Caco-2 (cell line): ENCODE measurements at regions of chr5 and their contacts with region 1.

Region 1: DNA sequence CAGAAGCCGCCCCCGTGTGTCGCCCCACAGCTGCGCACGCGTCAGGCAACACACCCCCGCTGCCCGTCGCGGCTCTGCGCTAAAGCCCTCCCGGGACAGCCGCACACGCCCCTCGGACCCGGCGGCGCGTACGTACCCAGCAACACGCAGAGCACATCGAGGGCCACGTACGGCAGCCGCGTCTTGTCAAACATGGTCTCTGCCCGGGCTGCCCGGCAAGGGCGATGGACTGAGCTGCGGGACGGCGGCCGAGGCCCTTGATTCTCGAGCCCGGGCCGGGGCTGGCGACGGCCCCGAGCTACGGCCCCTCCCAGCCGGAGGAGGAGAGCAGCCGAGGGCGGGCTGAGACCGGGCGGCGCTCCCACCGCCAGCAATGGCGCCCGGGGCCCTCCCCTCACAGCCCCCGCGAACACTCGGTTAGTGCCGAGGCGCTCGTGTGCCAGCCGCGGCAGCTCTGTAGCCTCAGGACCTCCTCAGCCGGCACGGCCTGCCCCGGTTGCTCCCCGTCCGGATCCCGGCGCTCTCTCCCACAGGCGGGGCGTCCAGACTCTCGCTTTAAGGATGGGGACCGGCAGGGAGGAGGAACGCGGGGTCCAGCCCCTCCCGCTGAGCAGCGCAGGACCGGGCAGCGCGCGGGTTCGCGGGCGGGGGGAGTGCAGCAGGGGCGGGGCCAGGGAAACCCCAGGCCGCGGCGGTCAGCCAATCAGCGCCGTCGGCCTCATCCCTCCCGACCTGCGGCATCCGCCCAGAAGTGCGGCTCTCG is at the start of gene PLPP1:
- DNase-seq: peak; percentile 90 to 95
- H3K4me3 ChIP-seq: peak within 1 kb of the TSS; percentile 98
- H3K4me3 Mint-ChIP-seq: peak within 1 kb of the TSS; percentile 78
- H3K27ac Mint-ChIP-seq: peak within 1 kb of the TSS; percentile 78
- H3K4me1 ChIP-seq: peaks cover 8% of the 10 kb centered on the region
- H3K4me1 Mint-ChIP-seq: peaks cover 21% of the 10 kb centered on the region
- H3K27me3 ChIP-seq: no peaks in the 10 kb centered on the region
- H3K27me3 Mint-ChIP-seq: no peaks in the 10 kb centered on the region
- CTCF ChIP-seq: peak in 1 of 2 experiments; percentile 0
- total RNA-seq, gene PLPP1: 49.4 and 57.9 TPM in 2 replicates

Region 2: DNA sequence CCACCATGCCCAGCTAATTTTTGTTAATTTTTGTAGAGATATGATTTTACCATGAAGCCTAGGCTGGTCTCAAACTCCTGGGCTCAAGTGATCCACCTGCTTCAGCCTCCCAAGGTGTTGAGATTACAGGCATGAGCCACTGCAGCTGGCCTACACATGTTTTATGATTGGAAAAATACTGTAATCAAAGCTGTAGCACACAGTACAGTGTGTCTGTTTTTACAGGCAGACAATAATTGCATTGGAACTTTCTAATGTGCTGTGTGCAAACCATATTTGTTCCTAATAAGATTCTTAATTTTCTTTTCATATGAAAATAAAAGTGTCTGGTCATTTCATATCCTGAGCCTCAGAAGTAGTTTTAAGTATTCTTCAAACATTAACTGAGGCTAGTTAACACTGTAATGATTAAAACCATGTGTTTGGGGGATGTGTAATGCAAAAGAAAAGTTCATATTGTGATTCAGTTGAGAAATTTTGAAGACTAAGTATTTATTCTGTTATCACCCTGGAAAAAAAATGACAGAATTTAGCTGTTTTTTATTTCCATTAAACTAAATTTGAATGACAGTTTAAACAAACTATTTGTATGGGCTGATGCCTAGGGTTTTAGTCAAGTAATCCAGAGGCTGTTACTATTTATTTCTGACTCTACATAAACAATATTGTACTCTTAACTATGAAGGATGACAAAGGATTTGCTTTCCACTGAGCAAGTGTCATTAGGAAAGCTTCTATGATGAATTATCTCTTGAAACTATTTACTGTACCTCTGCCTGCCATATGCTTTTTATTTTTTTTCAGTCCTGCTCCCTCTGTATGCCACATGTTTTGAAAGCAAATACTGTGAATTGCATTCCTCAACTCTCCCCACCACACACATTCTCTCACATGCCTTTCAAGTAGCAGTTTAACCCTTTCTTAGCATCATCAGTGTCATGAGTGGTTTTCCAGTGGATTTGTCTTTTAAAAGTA is 115.3 kb before region 1 on chr5:
- CTCF ChIA-PET with region 1: no interaction called
- POLR2A ChIA-PET with region 1: no interaction called
- intact Hi-C with region 1: loop called (anchors 5 kb)
- DNase-seq: peak; percentile 47 to 59
- H3K4me3 ChIP-seq: no peak overlapping the region
- H3K4me3 Mint-ChIP-seq: peak overlapping the region; percentile 2
- H3K27ac Mint-ChIP-seq: peak overlapping the region; percentile 58
- H3K4me1 ChIP-seq: peaks cover 26% of the 10 kb centered on the region
- H3K4me1 Mint-ChIP-seq: peaks cover 33% of the 10 kb centered on the region
- H3K27me3 ChIP-seq: no peaks in the 10 kb centered on the region
- H3K27me3 Mint-ChIP-seq: no peaks in the 10 kb centered on the region
- CTCF ChIP-seq: no peak

Region 3: GRCh38 chr5:55521881-55522280 is 12.7 kb before region 1 on chr5:
- CTCF ChIA-PET with region 1: no interaction called
- POLR2A ChIA-PET with region 1: no interaction called
- intact Hi-C with region 1: loop called (anchors 2 kb)
- DNase-seq: no peak
- H3K4me3 ChIP-seq: no peak overlapping the region
- H3K4me3 Mint-ChIP-seq: no peak overlapping the region
- H3K27ac Mint-ChIP-seq: peak overlapping the region; percentile 22
- H3K4me1 ChIP-seq: peaks cover 29% of the 10 kb centered on the region
- H3K4me1 Mint-ChIP-seq: peaks cover 15% of the 10 kb centered on the region
- H3K27me3 ChIP-seq: no peaks in the 10 kb centered on the region
- H3K27me3 Mint-ChIP-seq: no peaks in the 10 kb centered on the region
- CTCF ChIP-seq: no peak

Region 4: GRCh38 chr5:55546947-55547346 is 12.3 kb after region 1 on chr5:
- CTCF ChIA-PET with region 1: no interaction called
- POLR2A ChIA-PET with region 1: no interaction called
- intact Hi-C with region 1: loop called (anchors 1 kb)
- DNase-seq: peak; percentile 14 to 46
- H3K4me3 ChIP-seq: peak overlapping the region; percentile 4
- H3K4me3 Mint-ChIP-seq: peak overlapping the region; percentile 35
- H3K27ac Mint-ChIP-seq: no peak overlapping the region
- H3K4me1 ChIP-seq: peaks cover 24% of the 10 kb centered on the region
- H3K4me1 Mint-ChIP-seq: peaks cover 21% of the 10 kb centered on the region
- H3K27me3 ChIP-seq: no peaks in the 10 kb centered on the region
- H3K27me3 Mint-ChIP-seq: no peaks in the 10 kb centered on the region
- CTCF ChIP-seq: peak in 1 of 2 experiments; percentile 33